ENCODE measurements at regions of chr9 and their contacts with region 1.

Region 1: GRCh38 chr9:37575921-37576721 is at the start of gene FBXO10:
- DNase-seq: peak; percentile 76
- ATAC-seq: peak; percentile 85
- H3K4me3 Mint-ChIP-seq: peak within 1 kb of the TSS; percentile 82
- H3K27ac Mint-ChIP-seq: peak within 1 kb of the TSS; percentile 57
- H3K4me1 Mint-ChIP-seq: peaks cover 41% of the 10 kb centered on the region
- H3K27me3 Mint-ChIP-seq: no peaks in the 10 kb centered on the region
- CTCF ChIP-seq: no peak
- total RNA-seq, gene FBXO10: 14.0 to 14.7 TPM (median 14.4 TPM) in 3 replicates

Region 2: DNA sequence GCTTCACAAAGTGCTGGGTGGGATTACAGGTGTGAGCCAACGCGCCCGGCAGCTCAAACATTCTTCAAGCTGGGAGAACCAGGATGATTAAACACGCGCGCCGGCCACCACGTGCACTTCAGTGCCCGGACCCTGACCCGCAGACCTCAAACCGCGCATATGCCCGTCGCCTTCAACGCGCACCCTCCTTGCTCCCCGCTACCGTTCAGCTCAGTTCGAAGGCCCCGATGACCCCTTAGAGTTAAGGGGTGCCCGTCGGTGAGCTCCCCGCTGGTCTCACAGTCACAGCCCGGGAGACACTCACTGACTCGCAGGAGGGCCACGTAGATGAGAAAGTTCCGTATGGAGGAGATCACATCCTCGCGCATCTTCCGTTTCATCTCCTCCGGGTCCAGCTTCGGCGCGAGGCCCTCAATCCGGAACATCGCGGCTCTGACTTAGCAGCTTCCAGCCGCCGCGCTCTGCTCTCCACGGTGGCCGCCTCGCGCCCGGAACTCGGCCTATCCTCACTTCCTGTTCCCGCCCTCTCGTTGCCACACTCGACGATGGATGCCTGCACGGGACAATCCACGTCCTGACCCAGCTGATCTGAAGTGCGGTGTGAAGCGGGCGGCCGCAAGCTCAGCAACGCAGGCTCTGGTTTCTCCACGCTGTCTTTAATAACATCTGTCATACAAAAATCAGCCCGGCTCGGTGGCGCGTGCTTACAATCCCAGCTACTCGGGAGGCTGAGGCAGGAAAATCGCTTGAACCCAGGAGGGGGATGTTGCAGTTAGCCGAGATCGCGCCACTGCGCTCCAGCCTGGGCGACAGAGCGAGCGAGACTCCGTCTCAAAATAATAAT is 16.2 kb after region 1 on chr9 and contains the start of gene TOMM5:
- CTCF ChIA-PET with region 1: interaction called, 10 read pairs
- POLR2A ChIA-PET with region 1: no interaction called
- DNase-seq: peak; percentile 80
- ATAC-seq: peak; percentile 94
- H3K4me3 Mint-ChIP-seq: peak within 1 kb of the TSS; percentile 96
- H3K27ac Mint-ChIP-seq: peak within 1 kb of the TSS; percentile 87
- H3K4me1 Mint-ChIP-seq: peaks cover 21% of the 10 kb centered on the region
- H3K27me3 Mint-ChIP-seq: peaks cover 46% of the 10 kb centered on the region
- CTCF ChIP-seq: no peak
- total RNA-seq, gene TOMM5: 112 to 126 TPM (median 124 TPM) in 3 replicates

Region 3: DNA sequence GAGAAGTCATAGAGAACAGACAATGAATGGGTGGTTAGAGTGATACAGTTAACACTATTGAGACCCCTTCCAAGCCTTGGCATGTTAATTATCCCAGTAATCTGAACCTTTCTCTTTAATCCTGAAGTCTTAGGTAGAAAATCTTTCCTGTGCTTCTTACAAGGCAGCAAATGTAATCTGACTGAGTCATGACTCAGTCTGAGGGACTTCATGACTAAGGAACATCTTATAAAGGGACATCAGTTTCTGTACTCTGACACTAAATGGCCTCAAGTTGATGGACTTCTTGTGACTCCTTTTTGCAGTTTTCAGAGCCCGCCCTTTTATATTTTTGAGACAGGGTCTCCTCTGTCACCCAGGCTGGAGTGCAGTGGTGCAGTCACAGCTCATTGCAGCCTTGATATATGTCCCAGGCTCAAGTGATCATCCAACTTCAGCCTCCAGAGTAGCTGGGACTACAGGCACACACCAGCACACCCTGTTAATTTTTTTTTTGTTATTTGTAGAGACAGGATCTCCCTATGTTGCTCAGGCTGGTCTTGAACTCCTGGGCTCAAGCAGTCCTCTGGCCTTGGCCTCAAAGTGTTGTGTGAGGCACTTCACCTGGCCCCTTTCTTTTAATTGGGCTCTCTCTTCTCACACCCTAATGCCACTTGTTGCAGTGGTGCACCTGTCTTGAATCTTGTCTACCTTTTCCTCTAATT is 199.2 kb after region 1 on chr9:
- CTCF ChIA-PET with region 1: no interaction called
- POLR2A ChIA-PET with region 1: interaction called, 10 read pairs
- DNase-seq: no peak
- ATAC-seq: no peak
- H3K4me3 Mint-ChIP-seq: no peak overlapping the region
- H3K27ac Mint-ChIP-seq: no peak overlapping the region
- H3K4me1 Mint-ChIP-seq: no peaks in the 10 kb centered on the region
- H3K27me3 Mint-ChIP-seq: no peaks in the 10 kb centered on the region
- CTCF ChIP-seq: no peak